Activated CD8-positive, alpha-beta memory T cell treated with anti-CD3 and anti-CD28 coated beads, Interleukin-2, amount 10 ng/mL, durations not matched to agents 7 days and 5 days (primary cell): ENCODE measurements at regions of chr5 and their contacts with region 1.

Region 1: GRCh38 chr5:76544268-76544926 is 78.8 kb downstream of the F2RL2 start:
- DNase-seq: peak; percentile 82
- ATAC-seq: peak; percentile 24
- H3K4me3 Mint-ChIP-seq: peak overlapping the region; percentile 68
- H3K27ac Mint-ChIP-seq: peak overlapping the region; percentile 94
- H3K4me1 Mint-ChIP-seq: peaks cover 90% of the 10 kb centered on the region
- H3K27me3 Mint-ChIP-seq: no peaks in the 10 kb centered on the region

Region 2: DNA sequence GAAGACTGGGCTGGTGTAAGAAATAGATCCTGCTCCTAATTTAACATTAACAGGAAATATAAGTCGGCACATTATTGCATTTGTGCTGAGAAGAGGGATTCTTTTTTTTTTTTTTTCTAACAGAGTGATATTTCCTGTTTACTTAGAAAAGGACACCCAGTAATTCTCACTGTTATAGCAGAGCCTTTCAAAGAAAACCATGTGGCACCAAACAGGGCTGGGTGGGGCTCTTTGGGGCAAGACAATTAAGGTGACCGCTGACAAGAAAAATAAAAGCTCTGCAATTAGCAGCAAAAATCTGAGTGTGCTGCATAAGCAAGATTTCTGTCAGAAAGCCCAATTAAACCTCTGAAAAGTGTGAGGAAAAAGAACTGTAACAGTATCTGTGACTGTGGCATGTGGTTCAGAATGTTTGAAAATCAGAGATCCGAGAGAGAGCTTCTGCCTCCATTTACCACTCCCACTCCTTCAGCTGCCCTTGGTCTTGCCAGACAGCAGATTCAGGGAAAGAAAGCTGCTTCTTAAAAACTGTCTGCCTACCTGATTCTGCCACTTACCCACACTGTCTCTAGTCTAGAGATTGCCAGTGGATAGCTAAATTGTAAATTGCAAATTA is 218.4 kb before region 1 on chr5:
- CTCF ChIA-PET with region 1: interaction called, 13 read pairs
- DNase-seq: peak; percentile 86
- ATAC-seq: peak; percentile 96
- H3K4me3 Mint-ChIP-seq: peak overlapping the region; percentile 59
- H3K27ac Mint-ChIP-seq: peak overlapping the region; percentile 98
- H3K4me1 Mint-ChIP-seq: peaks cover 61% of the 10 kb centered on the region
- H3K27me3 Mint-ChIP-seq: no peaks in the 10 kb centered on the region

Region 3: GRCh38 chr5:76595755-76596481 is 51.5 kb after region 1 on chr5:
- CTCF ChIA-PET with region 1: no interaction called
- DNase-seq: no peak
- ATAC-seq: no peak
- H3K4me3 Mint-ChIP-seq: no peak overlapping the region
- H3K27ac Mint-ChIP-seq: peak overlapping the region; percentile 64
- H3K4me1 Mint-ChIP-seq: peaks cover 16% of the 10 kb centered on the region
- H3K27me3 Mint-ChIP-seq: no peaks in the 10 kb centered on the region